ENCODE measurements at regions of chr2 and their contacts with region 1.

Region 1: DNA sequence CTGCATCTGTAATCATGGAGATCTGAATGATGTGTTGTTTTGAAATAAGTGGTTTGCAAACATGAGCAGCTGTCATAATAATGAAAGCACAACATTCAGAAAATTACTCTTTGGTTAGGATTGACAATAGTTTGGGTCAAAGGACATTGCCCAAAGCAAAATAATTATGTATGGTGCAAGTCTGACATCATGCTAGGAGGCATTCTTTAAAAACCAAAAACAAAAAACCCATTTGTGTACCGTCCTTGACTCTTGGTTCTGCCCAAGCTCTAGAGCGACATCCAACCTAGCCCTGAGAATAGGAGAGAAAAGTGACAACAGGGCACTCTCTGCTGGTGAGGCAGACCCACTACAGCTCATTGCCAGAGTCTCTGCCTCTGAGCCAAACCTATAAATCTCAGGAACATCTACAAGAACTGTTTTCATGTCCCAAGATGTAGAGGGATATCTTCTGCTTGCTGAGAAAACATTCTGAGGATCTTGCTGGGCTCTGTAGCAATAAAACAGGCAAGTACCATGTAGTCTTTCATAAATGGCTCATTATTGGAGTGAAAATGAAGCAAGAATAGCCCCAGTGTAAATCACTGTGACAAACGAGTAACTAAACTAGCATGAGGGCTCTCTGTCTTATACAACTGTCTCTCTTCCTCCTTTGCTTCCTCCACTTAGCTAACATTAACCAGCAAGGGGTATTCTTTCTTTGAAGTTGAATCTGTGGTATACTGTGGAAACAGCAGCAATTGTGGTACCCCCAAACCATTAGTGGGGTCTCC is 266.8 kb upstream of the CXCR4 start:
- DNase-seq: peak; percentile 71
- ATAC-seq: peak; percentile 65
- H3K4me3 Mint-ChIP-seq: no peak overlapping the region
- H3K27ac Mint-ChIP-seq: no peak overlapping the region
- H3K4me1 Mint-ChIP-seq: peaks cover 48% of the 10 kb centered on the region
- H3K27me3 Mint-ChIP-seq: peaks cover 7% of the 10 kb centered on the region

Region 2: GRCh38 chr2:135797497-135798274 is 587.0 kb before region 1 on chr2:
- CTCF ChIA-PET with region 1: interaction called, 13 read pairs
- POLR2A ChIA-PET with region 1: no interaction called
- DNase-seq: peak; percentile 87
- ATAC-seq: peak; percentile 87
- H3K4me3 Mint-ChIP-seq: no peak overlapping the region
- H3K27ac Mint-ChIP-seq: no peak overlapping the region
- H3K4me1 Mint-ChIP-seq: peaks cover 23% of the 10 kb centered on the region
- H3K27me3 Mint-ChIP-seq: no peaks in the 10 kb centered on the region

Region 3: DNA sequence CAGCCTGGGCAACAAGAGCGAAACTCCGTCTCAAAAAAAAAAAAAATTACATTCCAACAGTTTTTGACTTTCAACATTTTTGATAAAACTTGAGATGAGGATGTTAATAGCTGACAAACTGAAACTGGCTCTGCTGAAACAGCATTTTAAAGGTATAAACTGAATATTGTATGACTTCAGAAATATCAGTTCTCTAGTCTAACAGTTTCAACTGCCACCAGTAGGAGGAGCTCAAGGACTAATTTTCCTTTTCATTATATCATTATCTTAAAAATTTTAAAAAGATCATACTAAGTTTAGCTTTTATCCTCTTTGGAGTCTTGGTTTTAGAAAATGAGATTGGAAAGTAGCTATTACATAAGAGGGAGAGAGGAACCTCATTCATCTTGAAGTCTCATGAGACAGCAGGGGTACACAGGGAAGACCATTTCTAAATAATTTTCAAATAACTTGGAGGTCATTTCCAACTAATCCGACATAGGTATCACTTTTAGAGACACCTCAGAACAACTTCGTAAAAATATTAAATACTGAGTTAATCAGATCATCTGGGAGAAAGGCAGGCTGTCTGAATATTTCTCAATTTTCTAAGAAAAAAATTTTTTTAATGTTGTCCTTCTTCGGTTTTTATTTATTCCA is 470.9 kb before region 1 on chr2:
- CTCF ChIA-PET with region 1: interaction called, 338 read pairs
- POLR2A ChIA-PET with region 1: interaction called, 5 read pairs
- DNase-seq: peak; percentile 75
- ATAC-seq: no peak
- H3K4me3 Mint-ChIP-seq: no peak overlapping the region
- H3K27ac Mint-ChIP-seq: no peak overlapping the region
- H3K4me1 Mint-ChIP-seq: peaks cover 14% of the 10 kb centered on the region
- H3K27me3 Mint-ChIP-seq: no peaks in the 10 kb centered on the region

Region 4: DNA sequence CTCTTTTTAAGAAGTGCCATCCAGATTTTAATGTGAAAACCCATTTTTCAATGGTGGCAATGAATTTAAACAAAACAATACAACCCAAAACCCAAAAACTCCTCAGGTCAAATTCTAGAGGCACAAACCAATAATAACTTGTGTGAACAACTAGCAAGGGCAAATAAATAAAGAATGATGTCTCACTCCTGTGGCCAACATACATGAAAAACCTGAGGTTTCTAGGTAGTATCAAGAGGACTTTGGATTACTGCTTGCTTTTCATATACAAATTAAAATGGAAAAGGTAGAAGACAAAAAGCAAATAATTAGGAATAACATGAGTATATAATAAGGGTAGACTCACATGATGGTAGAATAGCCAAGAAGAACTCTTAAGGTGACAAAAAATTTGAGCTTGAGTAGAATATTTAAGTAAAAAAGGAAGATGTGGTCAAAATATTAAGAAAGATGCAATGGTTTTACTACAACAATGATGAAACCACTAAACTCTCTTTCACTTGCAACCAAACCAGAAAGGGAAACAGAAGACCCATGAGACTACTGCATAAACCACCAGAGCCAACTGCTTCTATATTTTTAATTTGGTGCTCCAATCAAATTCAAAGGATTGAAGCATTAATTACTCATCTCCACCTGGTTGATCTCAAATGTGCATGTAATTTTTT is 452.8 kb before region 1 on chr2:
- CTCF ChIA-PET with region 1: interaction called, 12 read pairs
- POLR2A ChIA-PET with region 1: no interaction called
- DNase-seq: no peak
- ATAC-seq: peak; percentile 65
- H3K4me3 Mint-ChIP-seq: peak overlapping the region; percentile 20
- H3K27ac Mint-ChIP-seq: peak overlapping the region; percentile 89
- H3K4me1 Mint-ChIP-seq: peaks cover 52% of the 10 kb centered on the region
- H3K27me3 Mint-ChIP-seq: no peaks in the 10 kb centered on the region

Region 5: GRCh38 chr2:136059036-136059472 is 325.7 kb before region 1 on chr2:
- CTCF ChIA-PET with region 1: interaction called, 10 read pairs
- POLR2A ChIA-PET with region 1: interaction called, 5 read pairs
- DNase-seq: no peak
- ATAC-seq: no peak
- H3K4me3 Mint-ChIP-seq: no peak overlapping the region
- H3K27ac Mint-ChIP-seq: no peak overlapping the region
- H3K4me1 Mint-ChIP-seq: peaks cover 87% of the 10 kb centered on the region
- H3K27me3 Mint-ChIP-seq: no peaks in the 10 kb centered on the region

Region 6: GRCh38 chr2:136135921-136136906 is 248.5 kb before region 1 on chr2:
- CTCF ChIA-PET with region 1: interaction called, 21 read pairs
- POLR2A ChIA-PET with region 1: interaction called, 6 read pairs
- DNase-seq: peak; percentile 86
- ATAC-seq: peak; percentile 71
- H3K4me3 Mint-ChIP-seq: peak overlapping the region; percentile 44
- H3K27ac Mint-ChIP-seq: peak overlapping the region; percentile 95
- H3K4me1 Mint-ChIP-seq: peaks cover 91% of the 10 kb centered on the region
- H3K27me3 Mint-ChIP-seq: peaks cover 11% of the 10 kb centered on the region